Psoas muscle (tissue), 8 donors: ENCODE measurements at regions of chr13 and their contacts with region 1.

Region 1: GRCh38 chr13:43838594-43839308 is 40.8 kb downstream of the CCDC122 start:
- DNase-seq: no peak
- ATAC-seq: no peak
- H3K4me3 ChIP-seq: no peak overlapping the region
- H3K27ac ChIP-seq: no peak overlapping the region
- H3K4me1 ChIP-seq: no peaks in the 10 kb centered on the region
- H3K27me3 ChIP-seq: no peaks in the 10 kb centered on the region
- CTCF ChIP-seq: no peak

Region 2: DNA sequence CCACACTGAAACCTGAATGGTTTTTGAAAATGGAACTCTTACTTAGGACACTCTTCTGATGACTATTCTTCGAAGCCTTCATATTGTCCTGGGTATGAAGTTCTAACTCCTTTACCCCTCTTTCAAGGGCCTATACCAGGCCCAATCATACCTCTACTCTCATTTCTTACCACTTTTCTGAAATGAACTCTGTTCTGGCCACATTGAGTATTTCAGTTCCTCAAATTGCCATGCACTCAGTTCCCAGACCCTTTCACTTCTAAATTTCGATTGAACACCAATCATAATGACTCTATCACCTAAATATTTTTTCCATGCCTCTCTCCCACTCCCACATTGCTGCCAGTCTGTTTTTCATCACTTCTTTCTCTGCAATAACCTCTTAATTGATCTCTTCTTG is 94.6 kb after region 1 on chr13:
- intact Hi-C with region 1: loop called in 1 of 2 experiments (anchors 5 kb)
- DNase-seq: no peak
- ATAC-seq: no peak
- H3K4me3 ChIP-seq: no peak overlapping the region
- H3K27ac ChIP-seq: no peak overlapping the region
- H3K4me1 ChIP-seq: peaks cover 5% of the 10 kb centered on the region
- H3K27me3 ChIP-seq: no peaks in the 10 kb centered on the region
- CTCF ChIP-seq: no peak